ENCODE measurements at regions of chr17 and their contacts with region 1.

Region 1: GRCh38 chr17:28750178-28751047 is 6.6 kb downstream of the TRAF4 start:
- DNase-seq: peak; percentile 90 to 92 (median 92)
- ATAC-seq: peak; percentile 77 to 87 (median 84)
- H3K4me3 ChIP-seq: no peak overlapping the region
- H3K27ac ChIP-seq: no peak overlapping the region
- H3K4me1 ChIP-seq: peaks cover 0 to 21% (median 9%) of the 10 kb centered on the region in 4 donors
- H3K27me3 ChIP-seq: no peaks in the 10 kb centered on the region
- CTCF ChIP-seq: peak; percentile 99 to 100 (median 100)
- POLR2A ChIP-seq: no peak

Region 2: DNA sequence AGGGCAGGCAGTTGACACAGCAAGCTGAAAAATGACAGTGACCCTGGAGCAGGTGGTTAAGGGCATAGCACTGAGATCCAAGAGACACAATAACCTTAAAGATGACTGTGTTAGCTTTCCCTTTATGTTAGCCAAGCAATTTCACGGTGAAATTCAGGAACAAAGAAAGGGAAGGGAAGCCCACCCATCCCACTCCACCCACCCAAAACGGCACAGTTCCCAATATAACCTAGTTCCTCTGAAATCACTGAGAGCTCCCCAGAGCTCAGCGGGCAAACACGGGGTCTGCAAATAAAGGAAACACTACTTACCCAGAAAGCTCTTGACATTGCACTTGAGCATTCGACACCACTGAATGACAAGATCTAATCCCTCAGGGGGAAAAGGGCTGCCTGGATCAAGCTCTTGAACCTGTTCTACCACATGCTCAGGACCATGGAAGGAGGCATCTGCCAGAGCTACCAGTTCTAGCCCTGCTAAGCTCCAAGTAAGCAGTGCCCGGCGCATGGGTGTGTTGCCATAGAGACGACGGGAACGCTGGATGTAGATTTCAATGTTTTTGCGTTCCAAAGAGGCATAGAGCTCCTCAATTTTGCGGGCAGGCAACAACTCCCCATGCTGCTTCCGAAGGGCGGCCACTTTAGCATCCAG is 116.1 kb before region 1 on chr17:
- intact Hi-C with region 1: no loop called
- DNase-seq: no peak
- ATAC-seq: no peak
- H3K4me3 ChIP-seq: no peak overlapping the region
- H3K27ac ChIP-seq: no peak overlapping the region
- H3K4me1 ChIP-seq: no peaks in the 10 kb centered on the region
- H3K27me3 ChIP-seq: no peaks in the 10 kb centered on the region
- CTCF ChIP-seq: no peak
- POLR2A ChIP-seq: no peak

Region 3: GRCh38 chr17:28916302-28916934 is 166.0 kb after region 1 on chr17:
- intact Hi-C with region 1: loop called (anchors 10 kb)
- DNase-seq: peak in 1 of 3 donors; percentile 48
- ATAC-seq: peak; percentile 60 to 77 (median 69)
- H3K4me3 ChIP-seq: no peak overlapping the region
- H3K27ac ChIP-seq: no peak overlapping the region
- H3K4me1 ChIP-seq: peaks cover 0 to 18% (median 8%) of the 10 kb centered on the region in 4 donors
- H3K27me3 ChIP-seq: no peaks in the 10 kb centered on the region
- CTCF ChIP-seq: peak; percentile 70 to 83 (median 76)
- POLR2A ChIP-seq: no peak